PC-3 (cell line): ENCODE measurements at regions of chr7 and their contacts with region 1.

Region 1: DNA sequence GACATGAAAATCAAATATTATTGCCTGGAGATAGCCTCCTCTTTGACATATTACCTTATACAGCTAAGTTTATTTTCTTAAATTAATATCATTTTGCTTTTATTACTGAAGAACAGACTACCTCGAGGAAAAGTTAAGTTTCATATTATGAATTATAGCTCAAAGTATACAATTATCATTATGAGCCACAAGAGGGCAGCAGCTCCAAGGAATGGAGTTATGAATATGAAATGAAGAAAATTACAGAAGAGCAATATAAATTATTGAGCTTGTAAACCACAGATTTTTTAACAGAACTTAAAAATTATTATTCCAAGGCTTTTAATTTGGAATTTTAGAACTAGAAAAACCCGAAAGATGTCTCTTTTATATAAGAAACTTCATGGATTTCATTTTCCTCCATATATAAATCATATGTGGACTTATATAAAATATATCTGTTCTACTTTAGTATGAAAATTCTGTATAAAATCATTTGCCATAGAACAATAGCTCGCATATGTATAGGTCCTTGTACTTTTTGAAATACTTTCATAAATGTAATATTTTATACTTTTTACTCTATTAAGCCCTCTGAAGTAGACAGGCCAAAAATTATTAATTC is 40.1 kb downstream of the IQUB start:
- DNase-seq: peak; percentile 70
- ATAC-seq: peak; percentile 31; the same call in 1 of the 2 replicates
- H3K4me3 ChIP-seq: no peak overlapping the region
- H3K27ac ChIP-seq: no peak overlapping the region
- H3K4me1 ChIP-seq: no peaks in the 10 kb centered on the region
- H3K27me3 ChIP-seq: no peaks in the 10 kb centered on the region
- CTCF ChIP-seq: peak; percentile 73

Region 2: DNA sequence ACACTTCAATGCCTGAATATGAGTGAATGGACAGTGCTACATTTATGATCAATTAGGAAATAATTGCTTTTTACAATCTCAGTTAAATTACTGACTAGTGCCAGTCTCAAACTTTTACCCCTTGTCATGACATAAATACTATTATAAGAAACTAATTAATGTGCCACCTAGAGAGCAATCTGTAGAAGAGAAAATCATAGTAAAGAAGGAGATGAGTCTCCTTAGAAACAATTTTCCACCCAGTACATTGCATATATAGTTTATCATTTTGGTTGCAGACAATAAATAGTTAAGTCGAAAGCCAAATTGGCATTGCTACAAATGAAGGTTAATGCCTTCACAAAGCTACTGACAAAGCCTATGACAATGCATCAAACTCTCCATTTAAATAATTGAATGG is 363.2 kb before region 1 on chr7:
- CTCF ChIA-PET with region 1: no interaction called
- POLR2A ChIA-PET with region 1: no interaction called
- intact Hi-C with region 1: no loop called
- DNase-seq: no peak
- ATAC-seq: no peak
- H3K4me3 ChIP-seq: no peak overlapping the region
- H3K27ac ChIP-seq: no peak overlapping the region
- H3K4me1 ChIP-seq: no peaks in the 10 kb centered on the region
- H3K27me3 ChIP-seq: no peaks in the 10 kb centered on the region
- CTCF ChIP-seq: no peak

Region 3: DNA sequence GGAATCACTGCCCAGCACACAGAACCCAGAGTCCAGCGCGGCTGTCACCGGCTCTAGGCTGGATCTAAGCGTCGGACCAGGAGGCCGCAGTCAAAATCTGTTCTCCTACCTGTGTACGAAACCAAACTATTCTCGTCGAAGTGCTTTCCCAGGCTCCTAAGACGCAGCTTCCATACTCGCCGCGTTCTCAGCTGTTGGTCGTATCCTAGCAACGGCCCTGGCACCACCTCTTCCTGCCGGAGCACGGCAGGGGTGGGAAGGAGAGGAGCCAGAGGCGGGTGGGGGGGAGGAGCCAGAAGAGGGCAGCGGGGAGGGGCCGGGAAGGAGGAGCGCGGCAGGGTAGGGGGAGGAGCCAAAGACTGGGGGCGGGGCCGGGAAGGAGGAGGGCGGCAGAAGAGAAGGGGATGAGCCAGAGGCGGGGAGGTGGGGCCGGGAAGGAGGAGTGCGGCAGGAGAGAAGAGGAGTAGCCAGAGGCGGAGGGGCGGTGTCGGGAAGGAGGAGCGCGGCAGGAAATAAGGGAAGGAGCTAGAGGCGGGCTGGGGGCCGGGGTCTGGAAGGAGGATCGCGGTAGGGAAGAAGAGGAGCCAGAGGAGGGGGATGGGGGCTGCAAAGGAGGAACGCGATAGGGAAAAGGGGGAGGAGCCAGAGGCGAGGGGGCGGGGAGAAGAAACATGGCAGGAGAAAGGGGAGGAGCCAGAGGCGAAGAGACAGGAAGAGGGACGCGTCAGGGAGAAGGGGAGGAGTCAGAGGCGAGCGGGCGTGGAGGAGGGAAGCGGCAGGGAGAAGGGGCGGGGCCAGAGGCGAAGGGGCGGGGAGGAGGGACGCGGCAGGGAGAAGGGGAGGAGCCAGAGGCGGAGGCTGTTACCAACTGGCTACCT is 40.3 kb after region 1 on chr7 and contains the start of gene IQUB:
- CTCF ChIA-PET with region 1: interaction called, 22 read pairs
- POLR2A ChIA-PET with region 1: interaction called, 7 read pairs
- intact Hi-C with region 1: loop called (anchors 1 kb)
- DNase-seq: peak; percentile 93
- ATAC-seq: peak; percentile 77
- H3K4me3 ChIP-seq: peak within 1 kb of the TSS; percentile 73
- H3K27ac ChIP-seq: no peak within 1 kb of the TSS
- H3K4me1 ChIP-seq: peaks cover 27% of the 10 kb centered on the region
- H3K27me3 ChIP-seq: peaks cover 17% of the 10 kb centered on the region
- CTCF ChIP-seq: no peak
- total RNA-seq, gene IQUB: 0.04 and 0.06 TPM in 2 replicates

Region 4: GRCh38 chr7:123557398-123558288 is 63.3 kb after region 1 on chr7 and contains the start of gene NDUFA5:
- CTCF ChIA-PET with region 1: interaction called, 12 read pairs
- POLR2A ChIA-PET with region 1: interaction called, 3 read pairs
- intact Hi-C with region 1: no loop called
- DNase-seq: peak; percentile 98
- ATAC-seq: peak; percentile 98
- H3K4me3 ChIP-seq: peak within 1 kb of the TSS; percentile 92
- H3K27ac ChIP-seq: peak within 1 kb of the TSS; percentile 62
- H3K4me1 ChIP-seq: 0 out of 2 replicates have a peak, but pooled peaks cover 5% of the 10 kb centered on the region
- H3K27me3 ChIP-seq: no peaks in the 10 kb centered on the region
- CTCF ChIP-seq: no peak
- total RNA-seq, gene NDUFA5: 42.7 and 46.9 TPM in 2 replicates

Region 5: GRCh38 chr7:123871998-123872867 is 377.9 kb after region 1 on chr7:
- CTCF ChIA-PET with region 1: interaction called, 4 read pairs
- POLR2A ChIA-PET with region 1: no interaction called
- intact Hi-C with region 1: loop called (anchors 2 kb)
- DNase-seq: peak; percentile 76
- ATAC-seq: peak; percentile 98
- H3K4me3 ChIP-seq: no peak overlapping the region
- H3K27ac ChIP-seq: no peak overlapping the region
- H3K4me1 ChIP-seq: peaks cover 12% of the 10 kb centered on the region; the same call in 1 of the 2 replicates
- H3K27me3 ChIP-seq: no peaks in the 10 kb centered on the region
- CTCF ChIP-seq: peak; percentile 86